ENCODE measurements at regions of chr9 and their contacts with region 1.

Region 1: GRCh38 chr9:129139993-129140396 is 28.8 kb downstream of the PTPA start:
- DNase-seq: peak; percentile 91 to 99
- H3K4me3 ChIP-seq: peak overlapping the region; percentile 36 to 42
- H3K27ac ChIP-seq: peak overlapping the region; percentile 99 to 100
- H3K4me1 ChIP-seq: peaks cover 22 to 40% of the 10 kb centered on the region in 2 donors
- H3K27me3 ChIP-seq: no peaks in the 10 kb centered on the region
- CTCF ChIP-seq: peak in 2 of 4 experiments; percentile 2 to 25
- POLR2A ChIP-seq: peak; percentile 70 to 73

Region 2: GRCh38 chr9:129495534-129496325 is 355.7 kb after region 1 on chr9:
- intact Hi-C with region 1: loop called (anchors 10 kb)
- DNase-seq: peak; percentile 95 to 97
- H3K4me3 ChIP-seq: peak overlapping the region; percentile 63 to 67
- H3K27ac ChIP-seq: peak overlapping the region; percentile 98 to 100
- H3K4me1 ChIP-seq: peaks cover 4 to 34% of the 10 kb centered on the region in 2 donors
- H3K27me3 ChIP-seq: no peaks in the 10 kb centered on the region
- CTCF ChIP-seq: peak in 1 of 4 experiments; percentile 11
- POLR2A ChIP-seq: peak; percentile 18 to 39

Measured in uterus (tissue), 4 donors.